ENCODE measurements at regions of chr3 and their contacts with region 1.

Region 1: DNA sequence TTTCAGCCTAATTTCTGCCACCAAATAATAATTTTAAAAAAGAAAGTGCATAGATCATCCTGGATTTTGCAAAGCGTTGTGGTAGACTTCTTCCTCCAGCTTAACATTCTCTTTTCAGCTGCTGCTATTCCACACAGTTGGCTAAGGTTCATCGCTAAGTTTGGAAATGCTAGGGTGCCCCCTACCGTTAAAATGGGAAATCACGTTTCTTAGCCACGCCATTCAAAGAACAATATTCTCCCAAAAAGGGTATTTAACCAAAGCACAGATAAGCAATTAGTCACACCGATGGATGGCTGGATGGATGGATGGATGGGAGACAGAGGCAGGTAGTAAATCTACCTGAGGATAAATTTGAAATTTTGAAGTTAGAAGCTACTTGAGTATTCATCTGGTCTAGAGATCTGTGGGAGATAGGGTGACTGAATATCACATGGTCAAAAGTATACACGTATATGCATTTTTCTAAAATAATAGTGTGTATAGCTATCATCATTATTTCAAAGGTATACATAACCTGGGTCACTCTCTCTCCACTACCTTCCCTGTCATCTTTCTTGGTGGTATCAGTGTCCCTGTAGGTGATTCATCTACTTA is 67.2 kb downstream of the EFHB start:
- DNase-seq: peak; percentile 27
- ATAC-seq: peak; percentile 73; the same call in 1 of the 2 replicates
- H3K4me3 ChIP-seq: no peak overlapping the region
- H3K27ac ChIP-seq: no peak overlapping the region
- H3K4me1 ChIP-seq: no peaks in the 10 kb centered on the region
- H3K27me3 ChIP-seq: no peaks in the 10 kb centered on the region
- CTCF ChIP-seq: peak; percentile 76

Region 2: DNA sequence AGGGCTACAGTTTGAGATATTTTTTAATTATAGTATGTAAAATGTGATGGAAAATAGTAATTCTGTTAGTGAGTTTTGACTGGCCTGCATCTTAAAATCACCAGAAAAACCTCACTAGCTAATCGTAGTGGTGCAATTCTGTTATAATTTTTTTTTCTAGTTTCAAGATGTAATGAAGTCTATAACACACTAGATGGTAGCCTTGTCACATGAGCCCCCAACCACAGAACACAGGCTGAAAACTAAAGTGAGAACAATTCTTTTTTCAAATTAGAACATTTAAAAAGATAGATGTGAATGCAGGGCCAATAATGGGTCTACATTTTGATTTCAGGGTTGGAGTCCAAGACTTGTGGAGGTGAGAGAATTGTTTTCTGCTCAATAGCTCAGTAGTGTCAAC is 801.8 kb before region 1 on chr3:
- CTCF ChIA-PET with region 1: no interaction called
- POLR2A ChIA-PET with region 1: no interaction called
- in situ Hi-C with region 1: no loop called
- intact Hi-C with region 1: loop called (anchors 5 kb)
- DNase-seq: no peak
- ATAC-seq: no peak
- H3K4me3 ChIP-seq: no peak overlapping the region
- H3K27ac ChIP-seq: no peak overlapping the region
- H3K4me1 ChIP-seq: no peaks in the 10 kb centered on the region
- H3K27me3 ChIP-seq: no peaks in the 10 kb centered on the region
- CTCF ChIP-seq: peak; percentile 32; the same call in 1 of the 2 replicates

Region 3: GRCh38 chr3:19348929-19349564 is 517.8 kb before region 1 on chr3:
- CTCF ChIA-PET with region 1: interaction called, 5 read pairs
- POLR2A ChIA-PET with region 1: no interaction called
- in situ Hi-C with region 1: no loop called
- intact Hi-C with region 1: loop called (anchors 2 kb)
- DNase-seq: peak; percentile 17
- ATAC-seq: no peak
- H3K4me3 ChIP-seq: no peak overlapping the region
- H3K27ac ChIP-seq: no peak overlapping the region
- H3K4me1 ChIP-seq: no peaks in the 10 kb centered on the region
- H3K27me3 ChIP-seq: no peaks in the 10 kb centered on the region
- CTCF ChIP-seq: peak; percentile 70

Region 4: GRCh38 chr3:19506171-19506570 is 360.7 kb before region 1 on chr3:
- CTCF ChIA-PET with region 1: no interaction called
- POLR2A ChIA-PET with region 1: no interaction called
- in situ Hi-C with region 1: no loop called
- intact Hi-C with region 1: no loop called
- DNase-seq: no peak
- ATAC-seq: no peak
- H3K4me3 ChIP-seq: no peak overlapping the region
- H3K27ac ChIP-seq: no peak overlapping the region
- H3K4me1 ChIP-seq: no peaks in the 10 kb centered on the region
- H3K27me3 ChIP-seq: no peaks in the 10 kb centered on the region
- CTCF ChIP-seq: no peak

Region 5: DNA sequence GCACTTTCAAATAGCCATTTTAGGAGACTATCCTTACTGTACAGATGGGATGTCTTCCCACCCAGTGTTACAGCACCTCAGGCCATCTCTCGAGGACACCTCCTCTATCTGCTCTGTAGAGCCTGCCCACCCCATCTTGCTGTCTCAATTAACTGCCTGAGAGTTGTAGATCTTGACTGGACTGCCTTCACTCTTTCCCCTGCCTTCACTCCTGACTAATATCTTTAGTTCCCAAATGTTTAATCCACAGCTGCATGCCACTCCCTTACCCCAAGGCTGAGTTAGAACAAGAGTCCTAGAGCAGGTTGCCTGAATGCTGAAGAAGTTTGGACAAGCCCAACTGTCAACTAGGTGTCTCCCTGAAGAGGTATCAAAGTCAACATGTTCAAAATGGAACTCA is 146.5 kb after region 1 on chr3:
- CTCF ChIA-PET with region 1: no interaction called
- POLR2A ChIA-PET with region 1: no interaction called
- in situ Hi-C with region 1: no loop called
- intact Hi-C with region 1: no loop called
- DNase-seq: no peak
- ATAC-seq: no peak
- H3K4me3 ChIP-seq: no peak overlapping the region
- H3K27ac ChIP-seq: no peak overlapping the region
- H3K4me1 ChIP-seq: no peaks in the 10 kb centered on the region
- H3K27me3 ChIP-seq: no peaks in the 10 kb centered on the region
- CTCF ChIP-seq: no peak